ENCODE measurements at regions of chr2 and their contacts with region 1.

Region 1: GRCh38 chr2:192162392-192163042 is 32.2 kb downstream of the TMEFF2 start:
- DNase-seq: peak; percentile 63
- H3K4me3 ChIP-seq: peak overlapping the region in 1 of 4 donors; percentile 16
- H3K27ac ChIP-seq: no peak overlapping the region
- H3K4me1 ChIP-seq: peaks cover 0 to 6% (median 4%) of the 10 kb centered on the region in 4 donors
- H3K27me3 ChIP-seq: no peaks in the 10 kb centered on the region
- CTCF ChIP-seq: peak; percentile 92 to 95 (median 95)
- EP300 ChIP-seq: no peak
- POLR2A ChIP-seq: no peak

Region 2: DNA sequence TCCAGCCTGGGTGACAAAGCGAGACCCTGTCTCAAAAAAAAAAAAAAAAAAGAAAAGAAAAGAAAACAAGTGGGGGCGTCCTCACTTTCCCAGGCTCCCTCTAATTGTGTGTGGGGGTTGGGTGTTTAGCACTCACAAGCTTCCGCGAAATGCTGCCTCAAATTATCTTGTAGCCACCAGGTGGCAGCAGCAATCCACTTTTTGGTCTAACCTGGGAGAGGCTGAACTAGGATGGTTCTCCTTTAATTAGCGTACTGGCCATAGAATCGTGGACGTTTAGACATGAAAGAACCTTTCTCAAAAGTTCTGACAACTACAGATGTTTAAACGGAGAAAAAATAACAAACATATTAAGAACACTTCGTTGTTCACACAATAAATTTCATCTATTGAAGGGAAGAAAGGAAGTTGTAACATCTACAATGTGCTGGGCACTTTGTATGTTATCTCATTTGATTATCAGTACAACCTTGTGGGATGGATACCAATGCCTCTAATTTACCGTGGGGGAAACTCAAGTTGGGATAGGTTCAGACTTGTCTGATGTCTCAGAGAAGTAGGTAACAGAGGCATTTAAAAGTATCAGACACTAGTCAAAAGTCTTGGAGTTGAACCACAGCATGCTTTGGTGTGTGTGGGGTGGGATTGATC is 607.3 kb before region 1 on chr2:
- in situ Hi-C with region 1: loop called (anchors 5 to 25 kb)
- intact Hi-C with region 1: loop called (anchors 10 kb)
- DNase-seq: peak; percentile 88
- H3K4me3 ChIP-seq: no peak overlapping the region
- H3K27ac ChIP-seq: no peak overlapping the region
- H3K4me1 ChIP-seq: peaks cover 0 to 3% (median 0%) of the 10 kb centered on the region in 4 donors
- H3K27me3 ChIP-seq: no peaks in the 10 kb centered on the region
- CTCF ChIP-seq: peak; percentile 68 to 78 (median 73)
- EP300 ChIP-seq: no peak
- POLR2A ChIP-seq: no peak

Region 3: GRCh38 chr2:191811807-191812602 is 350.5 kb before region 1 on chr2:
- in situ Hi-C with region 1: loop called (anchors 5 to 10 kb)
- intact Hi-C with region 1: loop called (anchors 5 kb)
- DNase-seq: peak; percentile 55
- H3K4me3 ChIP-seq: no peak overlapping the region
- H3K27ac ChIP-seq: no peak overlapping the region
- H3K4me1 ChIP-seq: no peaks in the 10 kb centered on the region
- H3K27me3 ChIP-seq: no peaks in the 10 kb centered on the region
- CTCF ChIP-seq: peak; percentile 66 to 74 (median 74)
- EP300 ChIP-seq: no peak
- POLR2A ChIP-seq: no peak

Region 4: GRCh38 chr2:191818725-191819350 is 343.7 kb before region 1 on chr2:
- in situ Hi-C with region 1: loop called (anchors 5 to 10 kb)
- intact Hi-C with region 1: loop called (anchors 5 kb)
- DNase-seq: no peak
- H3K4me3 ChIP-seq: no peak overlapping the region
- H3K27ac ChIP-seq: no peak overlapping the region
- H3K4me1 ChIP-seq: no peaks in the 10 kb centered on the region
- H3K27me3 ChIP-seq: no peaks in the 10 kb centered on the region
- CTCF ChIP-seq: no peak
- EP300 ChIP-seq: no peak
- POLR2A ChIP-seq: no peak

Region 5: DNA sequence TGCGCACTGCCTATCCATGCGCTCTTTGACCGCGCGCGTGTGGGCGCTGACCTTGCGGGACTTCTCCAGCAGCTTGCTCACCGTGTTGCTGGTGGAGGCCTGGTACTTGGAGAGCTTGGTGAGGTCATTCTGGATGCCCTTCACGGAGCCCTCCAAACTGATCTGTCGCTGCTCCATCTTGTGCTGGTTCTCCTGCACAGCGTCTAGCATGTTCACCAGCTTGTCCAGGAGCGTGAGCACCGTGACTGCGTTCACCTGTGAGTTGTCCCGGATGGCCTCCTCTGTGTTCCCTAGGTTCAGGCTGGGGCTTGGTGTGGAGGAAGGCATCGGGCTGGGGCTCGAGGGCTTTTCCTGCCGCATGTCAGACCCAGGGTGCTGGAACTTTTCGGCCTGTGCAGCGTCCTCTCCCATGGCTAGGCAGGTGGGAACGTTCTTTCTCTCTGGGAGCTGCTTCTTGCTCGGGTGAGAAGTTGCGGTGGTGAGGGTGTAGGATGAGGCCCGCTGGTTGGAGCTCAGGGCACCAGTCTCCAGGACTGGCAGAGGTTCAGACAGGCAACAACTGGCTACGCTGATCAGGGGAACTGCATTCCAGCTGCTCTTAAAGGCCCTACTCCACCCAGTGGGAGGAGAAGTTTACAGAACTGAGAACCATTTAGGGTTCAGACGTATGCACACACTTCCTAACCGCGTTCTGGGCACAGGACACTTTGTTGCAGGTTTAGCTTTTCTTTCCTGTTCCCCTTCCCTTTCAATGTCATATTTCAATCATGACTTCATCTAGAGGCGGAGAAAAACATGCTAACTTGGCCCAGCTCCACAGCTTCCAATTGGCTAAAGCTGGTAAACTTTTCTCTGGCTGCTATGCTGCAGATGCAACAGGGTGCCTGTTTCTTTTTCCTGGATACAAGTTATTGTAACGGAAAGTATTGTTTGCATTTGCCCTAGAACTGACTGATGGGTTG is 315.7 kb before region 1 on chr2 and contains the start of gene CAVIN2:
- in situ Hi-C with region 1: no loop called
- intact Hi-C with region 1: no loop called
- DNase-seq: peak; percentile 50
- H3K4me3 ChIP-seq: peak within 1 kb of the TSS; percentile 24 to 53 (median 38)
- H3K27ac ChIP-seq: peak within 1 kb of the TSS; percentile 81 to 91 (median 85)
- H3K4me1 ChIP-seq: peaks cover 0 to 20% (median 10%) of the 10 kb centered on the region in 4 donors
- H3K27me3 ChIP-seq: no peaks in the 10 kb centered on the region
- CTCF ChIP-seq: peak in 1 of 5 experiments; percentile 5
- EP300 ChIP-seq: no peak
- POLR2A ChIP-seq: peak; percentile 59
- total RNA-seq, gene CAVIN2: 21.3 to 59.3 (median 25.0) TPM

Region 6: DNA sequence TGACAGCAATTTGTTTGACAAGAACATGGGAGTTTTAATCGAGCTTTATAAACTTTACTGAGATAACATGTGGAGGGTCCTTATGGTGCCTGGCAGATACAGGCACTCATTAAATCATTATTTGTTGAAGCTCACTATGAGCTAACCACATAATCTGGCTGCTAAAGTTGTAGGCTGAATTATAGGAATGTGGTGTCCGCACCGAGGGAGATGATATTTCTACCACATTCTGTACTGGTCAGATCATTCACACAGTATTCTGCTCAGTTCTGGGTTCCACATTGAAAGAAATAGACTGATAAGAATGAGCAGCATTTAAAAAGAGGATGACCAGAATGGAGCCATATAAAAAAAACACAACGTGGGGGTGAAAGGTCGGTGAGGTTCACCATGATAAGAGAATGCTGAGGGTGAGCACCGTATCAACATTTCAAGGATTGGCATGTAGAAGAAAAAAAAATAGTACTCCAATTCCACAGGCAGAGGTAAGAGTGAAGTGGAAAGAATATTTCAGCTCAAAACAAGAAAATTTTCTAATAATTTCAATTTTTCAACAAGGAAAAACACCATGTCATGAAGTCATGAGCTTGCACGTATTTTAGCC is 22.2 kb before region 1 on chr2:
- in situ Hi-C with region 1: no loop called
- intact Hi-C with region 1: loop called (anchors 2 kb)
- DNase-seq: no peak
- H3K4me3 ChIP-seq: no peak overlapping the region
- H3K27ac ChIP-seq: no peak overlapping the region
- H3K4me1 ChIP-seq: no peaks in the 10 kb centered on the region
- H3K27me3 ChIP-seq: no peaks in the 10 kb centered on the region
- CTCF ChIP-seq: no peak
- EP300 ChIP-seq: no peak
- POLR2A ChIP-seq: no peak

Measured in transverse colon (tissue), 4 donors.